Left cardiac atrium (tissue), 4 donors: ENCODE measurements at regions of chr7 and their contacts with region 1.

Region 1: DNA sequence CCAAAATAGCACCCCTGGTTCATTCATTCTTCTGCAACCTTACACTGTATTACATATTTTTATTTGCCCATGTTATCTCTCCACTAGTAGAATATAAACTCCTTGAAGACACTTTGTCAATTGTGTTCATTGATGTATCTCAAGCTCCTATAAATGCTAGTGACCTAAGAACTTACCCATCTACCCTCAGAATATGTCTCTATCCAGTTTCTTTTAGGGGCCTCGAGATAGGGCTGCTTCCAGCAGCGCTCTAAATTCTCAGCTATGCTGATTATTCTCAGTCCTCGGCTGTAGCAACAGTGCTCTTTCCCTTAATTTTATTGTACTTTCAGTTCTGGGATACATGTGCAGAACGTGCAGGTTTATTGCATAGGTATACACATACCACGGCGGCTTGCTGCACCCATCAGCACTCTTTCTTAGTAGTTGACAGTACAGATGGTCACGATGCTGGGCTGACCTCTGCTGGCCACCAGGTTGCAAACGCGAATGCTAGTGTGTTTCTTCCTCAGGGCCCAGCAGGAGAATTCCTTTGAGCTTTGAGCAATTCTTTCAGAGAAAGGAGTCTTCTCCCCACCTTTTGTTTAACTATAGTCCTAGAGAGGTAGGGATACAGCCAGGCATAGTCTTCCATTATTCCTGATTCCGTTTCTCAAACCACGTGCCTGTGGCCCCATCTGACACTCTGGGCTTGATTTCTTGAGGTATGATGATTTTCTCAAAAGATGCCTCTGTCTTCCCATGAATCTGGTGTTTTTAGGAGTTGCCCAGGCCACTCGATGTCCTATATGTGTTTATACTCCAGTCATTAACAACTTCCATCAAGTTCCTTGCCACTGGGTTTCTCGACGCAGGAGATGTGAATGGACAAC is 49.1 kb upstream of the CDC14C start:
- DNase-seq: peak; percentile 39
- ATAC-seq: peak; percentile 57 to 68

Region 2: DNA sequence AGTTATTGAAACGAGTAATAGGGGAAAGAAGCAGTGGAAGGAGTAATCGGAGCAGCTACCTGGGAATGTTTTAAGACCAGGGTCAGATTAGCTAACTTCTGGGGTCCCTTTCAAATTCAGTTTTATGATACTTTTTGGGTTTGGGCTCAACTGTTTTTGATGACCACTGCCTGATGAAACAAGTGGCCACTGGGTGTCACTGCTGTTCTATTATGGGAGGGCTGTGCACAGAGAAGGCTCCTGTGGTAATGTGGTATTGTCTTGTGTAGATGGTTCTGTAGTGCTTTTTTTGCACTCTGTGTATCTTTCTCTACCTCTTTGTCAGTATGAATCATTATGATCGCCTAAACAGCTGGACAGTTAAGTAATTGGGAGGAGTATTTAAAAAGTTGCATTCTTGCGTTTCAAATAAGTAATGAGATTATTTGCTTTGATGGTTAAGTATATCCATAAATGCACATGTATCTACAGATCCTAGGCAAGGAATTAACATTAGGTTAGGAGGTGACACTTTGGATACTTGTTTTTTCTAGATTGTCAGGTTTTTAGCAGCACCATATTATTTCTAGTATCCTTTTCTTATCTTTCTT is 575.6 kb before region 1 on chr7:
- intact Hi-C with region 1: loop called in 1 of 2 experiments (anchors 5 kb)
- DNase-seq: peak; percentile 36
- ATAC-seq: peak; percentile 74 to 84

Region 3: DNA sequence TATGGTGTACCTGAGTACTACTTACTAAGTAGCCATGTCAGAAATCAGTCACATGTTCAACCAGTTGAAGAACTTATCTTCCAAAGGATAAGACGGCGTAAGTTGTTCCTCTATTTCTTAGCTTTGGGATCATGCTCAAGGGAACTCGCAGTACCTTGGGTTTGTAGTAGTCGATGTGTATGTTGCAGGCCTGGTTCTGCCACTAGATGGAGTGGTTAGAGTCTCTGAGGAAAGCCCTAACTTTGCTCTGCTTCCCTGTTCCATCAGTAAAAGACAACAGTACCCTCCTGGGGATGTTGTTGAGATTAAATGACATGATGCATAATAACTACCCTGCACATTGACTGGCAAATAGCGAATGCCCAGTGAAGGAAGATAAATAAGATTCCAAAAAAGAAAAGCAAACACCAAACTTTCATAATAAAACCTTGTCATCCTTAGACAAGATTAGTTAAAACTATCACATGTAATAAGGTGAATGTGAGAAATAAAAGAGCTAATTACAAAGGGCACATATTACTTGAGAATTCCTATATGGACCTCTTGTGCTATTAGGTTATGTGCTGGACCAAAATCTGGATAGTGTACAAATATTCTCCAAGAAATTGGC is 538.2 kb before region 1 on chr7:
- intact Hi-C with region 1: loop called in 1 of 2 experiments (anchors 10 kb)
- DNase-seq: no peak
- ATAC-seq: no peak

Region 4: GRCh38 chr7:48424731-48425130 is 450.6 kb before region 1 on chr7:
- intact Hi-C with region 1: loop called (anchors 5 to 10 kb)
- DNase-seq: no peak
- ATAC-seq: no peak